Naive thymus-derived CD4-positive, alpha-beta T cell (primary cell): ENCODE measurements at regions of chr19 and their contacts with region 1.

Region 1: GRCh38 chr19:56105090-56105701 is 15.9 kb downstream of the ZNF787 start:
- DNase-seq: peak; percentile 39 to 68 (median 55)
- ATAC-seq: peak; percentile 83
- H3K4me3 ChIP-seq: no peak overlapping the region
- H3K4me3 Mint-ChIP-seq: peak overlapping the region in 8 of 10 donors; percentile 26 to 71 (median 60)
- H3K27ac ChIP-seq: no peak overlapping the region
- H3K27ac Mint-ChIP-seq: peak overlapping the region in 4 of 9 donors; percentile 9 to 70 (median 62)
- H3K4me1 ChIP-seq: peaks cover 0 to 5% of the 10 kb centered on the region in 2 donors
- H3K4me1 Mint-ChIP-seq: peaks cover 22 to 49% (median 36%) of the 10 kb centered on the region in 7 donors
- H3K27me3 ChIP-seq: no peaks in the 10 kb centered on the region
- H3K27me3 Mint-ChIP-seq: no peaks in the 10 kb centered on the region

Region 2: GRCh38 chr19:56121180-56122167 is 16.3 kb after region 1 on chr19 and contains the start of gene ZNF787:
- CTCF ChIA-PET with region 1: no interaction called
- POLR2A ChIA-PET with region 1: interaction called, 6 read pairs
- intact Hi-C with region 1: loop called in 1 of 2 experiments (anchors 1 kb)
- DNase-seq: peak; percentile 94 to 98 (median 98)
- ATAC-seq: peak; percentile 88
- H3K4me3 ChIP-seq: peak within 1 kb of the TSS; percentile 79
- H3K4me3 Mint-ChIP-seq: peak within 1 kb of the TSS; percentile 85 to 93 (median 88)
- H3K27ac ChIP-seq: peak within 1 kb of the TSS; percentile 97
- H3K27ac Mint-ChIP-seq: peak within 1 kb of the TSS; percentile 87 to 98 (median 95)
- H3K4me1 ChIP-seq: peaks cover 8 to 34% of the 10 kb centered on the region in 2 donors
- H3K4me1 Mint-ChIP-seq: peaks cover 17 to 72% (median 58%) of the 10 kb centered on the region in 7 donors
- H3K27me3 ChIP-seq: no peaks in the 10 kb centered on the region
- H3K27me3 Mint-ChIP-seq: no peaks in the 10 kb centered on the region
- total RNA-seq, gene ZNF787: 19.7 to 41.2 (median 33.0) TPM

Region 3: DNA sequence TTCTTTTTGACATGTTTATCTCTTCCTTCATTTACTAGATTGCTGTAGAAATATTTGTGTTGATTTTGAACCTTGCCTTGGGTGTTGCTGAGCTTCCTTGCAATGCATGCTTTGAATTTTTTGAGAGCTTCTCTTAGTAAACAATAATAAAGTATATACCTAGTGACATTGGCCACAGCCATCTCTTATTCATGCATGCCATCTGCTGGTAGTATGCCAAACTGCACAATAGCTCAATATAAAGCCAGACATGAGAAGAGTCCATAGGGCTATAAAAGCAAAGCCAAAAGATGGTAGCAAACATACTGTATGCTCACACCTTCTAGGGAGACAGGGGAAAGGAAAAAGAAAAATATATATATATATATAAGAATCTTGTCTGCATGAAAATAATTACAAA is 228.3 kb after region 1 on chr19:
- CTCF ChIA-PET with region 1: no interaction called
- POLR2A ChIA-PET with region 1: no interaction called
- intact Hi-C with region 1: loop called in 1 of 2 experiments (anchors 1 kb)
- DNase-seq: peak in 5 of 9 donors; percentile 13 to 43 (median 32)
- ATAC-seq: peak; percentile 76
- H3K4me3 ChIP-seq: no peak overlapping the region
- H3K4me3 Mint-ChIP-seq: no peak overlapping the region
- H3K27ac ChIP-seq: no peak overlapping the region
- H3K27ac Mint-ChIP-seq: no peak overlapping the region
- H3K4me1 ChIP-seq: no peaks in the 10 kb centered on the region
- H3K4me1 Mint-ChIP-seq: no peaks in the 10 kb centered on the region
- H3K27me3 ChIP-seq: no peaks in the 10 kb centered on the region
- H3K27me3 Mint-ChIP-seq: peaks cover 0 to 9% (median 4%) of the 10 kb centered on the region in 5 donors

Region 4: DNA sequence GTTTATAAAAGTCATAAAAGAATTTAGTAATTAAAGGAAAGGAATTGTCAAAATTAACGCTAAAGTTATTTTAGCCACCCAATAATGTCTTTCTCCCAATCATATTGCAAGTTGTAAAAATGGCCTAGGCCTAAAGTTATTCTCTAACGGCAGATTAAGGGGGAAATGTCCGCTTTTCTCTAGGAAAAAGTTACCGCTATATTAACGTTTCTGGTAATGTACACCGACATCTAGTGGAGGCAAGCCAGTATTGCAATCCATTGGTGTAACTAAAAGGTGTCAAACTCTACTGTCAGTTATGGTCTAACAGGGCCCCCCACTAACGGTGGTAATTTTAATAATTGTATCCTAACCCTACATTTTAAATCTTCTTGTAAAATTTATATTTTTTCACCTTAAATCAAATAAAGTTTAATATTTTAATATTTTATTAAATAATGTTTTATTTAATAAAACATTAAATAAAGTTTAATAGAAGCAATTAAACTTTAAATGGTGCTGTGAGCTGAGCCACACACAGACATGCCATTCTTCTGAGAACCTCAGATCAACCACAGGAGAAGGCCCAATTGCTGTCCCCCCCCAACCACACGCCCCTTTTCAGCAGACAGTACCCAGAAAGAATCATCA is 245.3 kb after region 1 on chr19:
- CTCF ChIA-PET with region 1: no interaction called
- POLR2A ChIA-PET with region 1: no interaction called
- intact Hi-C with region 1: loop called in 1 of 2 experiments (anchors 1 kb)
- DNase-seq: peak in 8 of 9 donors; percentile 21 to 61 (median 46)
- ATAC-seq: peak; percentile 70
- H3K4me3 ChIP-seq: no peak overlapping the region
- H3K4me3 Mint-ChIP-seq: no peak overlapping the region
- H3K27ac ChIP-seq: no peak overlapping the region
- H3K27ac Mint-ChIP-seq: peak overlapping the region in 1 of 9 donors; percentile 44
- H3K4me1 ChIP-seq: no peaks in the 10 kb centered on the region
- H3K4me1 Mint-ChIP-seq: peaks cover 0 to 5% (median 0%) of the 10 kb centered on the region in 7 donors
- H3K27me3 ChIP-seq: no peaks in the 10 kb centered on the region
- H3K27me3 Mint-ChIP-seq: no peaks in the 10 kb centered on the region

Region 5: GRCh38 chr19:56538254-56538760 is 433.1 kb after region 1 on chr19:
- CTCF ChIA-PET with region 1: no interaction called
- POLR2A ChIA-PET with region 1: no interaction called
- intact Hi-C with region 1: no loop called
- DNase-seq: peak; percentile 84 to 94 (median 89)
- ATAC-seq: peak; percentile 94
- H3K4me3 ChIP-seq: peak overlapping the region; percentile 87
- H3K4me3 Mint-ChIP-seq: peak overlapping the region; percentile 88 to 95 (median 93)
- H3K27ac ChIP-seq: peak overlapping the region; percentile 83
- H3K27ac Mint-ChIP-seq: peak overlapping the region; percentile 90 to 97 (median 94)
- H3K4me1 ChIP-seq: peaks cover 5% of the 10 kb centered on the region in 2 donors
- H3K4me1 Mint-ChIP-seq: peaks cover 13 to 27% (median 21%) of the 10 kb centered on the region in 7 donors
- H3K27me3 ChIP-seq: no peaks in the 10 kb centered on the region
- H3K27me3 Mint-ChIP-seq: peaks cover 0 to 4% (median 0%) of the 10 kb centered on the region in 5 donors